ENCODE measurements at regions of chr20 and their contacts with region 1.

Region 1: DNA sequence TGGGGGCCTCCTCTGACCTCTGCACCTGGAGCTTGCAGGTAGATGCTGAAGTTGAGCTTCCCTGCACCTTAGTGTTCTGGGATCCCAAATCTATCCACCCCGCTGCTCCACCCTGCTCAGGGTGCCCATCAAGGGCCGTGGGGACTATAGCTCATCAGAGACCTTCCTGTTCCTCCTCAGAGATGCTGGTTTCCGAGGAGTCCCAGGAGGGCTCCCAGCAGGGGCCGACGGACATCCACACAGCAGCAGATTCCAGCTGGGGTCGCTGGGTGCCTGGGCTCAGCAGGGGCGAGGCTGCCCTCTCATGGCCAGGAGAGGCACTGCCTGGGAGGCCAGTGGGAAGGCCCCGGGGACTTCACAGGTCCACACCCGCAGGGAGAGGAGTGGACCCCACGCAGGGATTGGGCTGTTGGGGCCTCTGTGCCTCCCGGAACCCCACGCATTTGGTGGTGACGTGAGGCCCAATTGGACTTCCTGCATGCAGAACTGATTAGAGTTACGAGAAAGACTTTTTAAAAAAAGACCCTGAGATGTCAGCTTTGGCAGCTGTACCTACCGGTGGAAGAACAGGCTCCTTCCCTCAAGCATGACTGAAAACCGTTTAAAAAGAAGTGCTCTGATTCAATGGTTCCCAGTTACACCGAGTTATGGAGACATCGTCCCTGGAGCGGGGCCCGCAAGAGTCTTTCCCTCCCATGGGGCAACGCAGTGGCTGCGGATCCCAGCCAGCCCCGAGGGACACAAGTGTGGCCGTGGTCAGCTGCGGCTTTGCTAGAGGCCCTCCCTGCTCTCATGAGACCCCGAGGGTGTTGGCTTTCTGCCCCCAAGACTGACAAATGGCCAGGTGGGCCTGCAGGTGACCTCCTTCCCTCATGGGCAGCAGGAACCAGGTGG is 25.3 kb upstream of the SLCO4A1 start:
- DNase-seq: peak; percentile 88
- ATAC-seq: peak; percentile 75
- H3K4me3 Mint-ChIP-seq: peak overlapping the region; percentile 57
- H3K27ac Mint-ChIP-seq: peak overlapping the region; percentile 91
- H3K4me1 Mint-ChIP-seq: peaks cover 29% of the 10 kb centered on the region
- H3K27me3 Mint-ChIP-seq: no peaks in the 10 kb centered on the region

Region 2: DNA sequence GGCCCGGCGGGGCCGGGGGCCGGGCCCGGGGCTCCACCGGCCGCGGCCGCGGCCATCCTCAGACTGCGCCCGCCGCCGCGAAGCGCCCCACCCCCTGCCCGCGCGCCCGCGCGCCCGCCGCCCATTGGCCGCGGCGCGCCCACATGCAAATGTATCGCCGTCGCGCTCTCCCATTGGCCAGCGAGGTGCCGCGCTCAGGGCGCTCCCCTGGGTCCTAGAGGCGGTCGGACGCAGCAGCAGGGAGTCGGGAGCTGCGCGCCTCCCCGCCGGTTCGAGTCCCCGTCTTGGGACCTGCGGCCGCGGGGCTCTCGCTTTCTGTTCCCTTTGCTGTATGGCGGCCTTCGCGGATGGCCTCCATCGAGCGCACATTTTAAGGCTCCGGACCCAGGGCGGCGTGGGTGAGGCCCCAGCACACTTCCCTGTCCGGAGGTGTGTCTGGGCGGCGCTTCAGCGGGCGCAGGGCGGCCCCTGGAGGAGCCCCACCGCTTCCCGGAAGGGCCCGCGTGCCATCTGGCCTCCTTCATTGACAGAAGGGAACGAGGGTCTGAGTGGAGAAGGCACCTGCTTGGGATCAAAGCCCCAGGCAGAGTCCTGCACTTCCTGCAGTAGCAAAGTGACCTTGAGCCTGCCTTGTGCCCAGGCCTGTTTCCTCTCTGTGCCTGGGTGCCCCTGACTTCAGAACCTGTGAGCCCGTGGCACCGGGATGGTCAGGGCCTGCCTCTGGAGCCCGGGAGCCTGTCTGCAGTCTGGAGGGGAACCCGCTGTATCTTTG is 209.6 kb before region 1 on chr20 and contains the start of gene CABLES2:
- CTCF ChIA-PET with region 1: interaction called, 4 read pairs
- POLR2A ChIA-PET with region 1: no interaction called
- intact Hi-C with region 1: loop called (anchors 1 to 5 kb)
- DNase-seq: peak; percentile 96
- ATAC-seq: peak; percentile 93
- H3K4me3 Mint-ChIP-seq: peak within 1 kb of the TSS; percentile 72
- H3K27ac Mint-ChIP-seq: peak within 1 kb of the TSS; percentile 82
- H3K4me1 Mint-ChIP-seq: peaks cover 23% of the 10 kb centered on the region
- H3K27me3 Mint-ChIP-seq: peaks cover 2% of the 10 kb centered on the region
- total RNA-seq, gene CABLES2: 6.4 to 7.6 TPM

Region 3: GRCh38 chr20:62570897-62571666 is 45.9 kb before region 1 on chr20:
- CTCF ChIA-PET with region 1: no interaction called
- POLR2A ChIA-PET with region 1: no interaction called
- intact Hi-C with region 1: no loop called
- DNase-seq: no peak
- ATAC-seq: peak; percentile 14
- H3K4me3 Mint-ChIP-seq: no peak overlapping the region
- H3K27ac Mint-ChIP-seq: no peak overlapping the region
- H3K4me1 Mint-ChIP-seq: no peaks in the 10 kb centered on the region
- H3K27me3 Mint-ChIP-seq: peaks cover 16% of the 10 kb centered on the region

Region 4: DNA sequence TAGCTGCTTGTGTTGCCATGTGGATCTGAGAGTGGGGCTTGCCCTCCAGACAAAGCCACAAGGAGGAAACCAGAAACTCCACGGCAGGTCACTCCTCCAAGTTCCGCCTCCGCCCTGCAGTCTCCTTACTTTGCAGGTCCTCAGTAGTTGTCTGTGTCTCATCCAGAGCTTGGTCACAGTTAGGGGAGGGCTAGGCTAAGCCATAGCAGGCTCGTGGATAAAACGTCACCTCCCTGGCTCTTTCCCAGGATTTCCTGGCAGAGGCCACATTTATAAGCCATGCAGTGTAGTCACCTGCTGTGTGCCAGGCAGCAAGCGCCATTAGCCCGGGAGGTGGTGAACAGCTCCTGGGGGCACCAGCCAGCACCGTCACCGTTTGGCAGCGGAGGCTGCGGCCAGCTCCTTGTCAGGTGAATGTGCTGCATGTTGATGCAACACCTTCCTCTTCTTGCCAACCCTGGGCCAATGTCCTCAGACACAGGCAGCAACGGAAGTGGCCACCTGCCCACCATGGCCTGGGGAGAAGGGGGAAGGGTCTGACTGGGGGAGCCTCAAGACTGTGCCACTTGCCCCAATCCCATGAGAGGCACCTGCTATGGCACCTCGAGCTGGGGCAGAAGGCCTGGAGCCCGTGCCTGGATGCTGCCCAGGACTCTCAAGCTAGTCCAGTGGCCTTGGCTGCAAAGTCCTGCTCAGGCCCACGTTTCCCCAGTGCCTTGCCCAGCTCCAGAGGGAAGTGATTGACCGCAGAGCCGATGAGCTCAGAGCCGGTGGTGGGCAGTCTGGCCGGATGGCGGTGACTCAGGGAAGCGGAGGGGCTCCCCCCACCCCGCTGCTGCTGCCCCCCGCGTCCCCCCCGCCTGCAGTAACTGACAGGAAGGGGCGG is 13.7 kb before region 1 on chr20:
- CTCF ChIA-PET with region 1: interaction called, 6 read pairs
- POLR2A ChIA-PET with region 1: no interaction called
- intact Hi-C with region 1: loop called in 1 of 2 experiments (anchors 1 kb)
- DNase-seq: peak; percentile 78
- ATAC-seq: peak; percentile 70
- H3K4me3 Mint-ChIP-seq: peak overlapping the region; percentile 41
- H3K27ac Mint-ChIP-seq: peak overlapping the region; percentile 44
- H3K4me1 Mint-ChIP-seq: peaks cover 21% of the 10 kb centered on the region
- H3K27me3 Mint-ChIP-seq: peaks cover 16% of the 10 kb centered on the region

Region 5: GRCh38 chr20:62953839-62954703 is 337.1 kb after region 1 on chr20:
- CTCF ChIA-PET with region 1: no interaction called
- POLR2A ChIA-PET with region 1: no interaction called
- intact Hi-C with region 1: no loop called
- DNase-seq: peak; percentile 74
- ATAC-seq: peak; percentile 82
- H3K4me3 Mint-ChIP-seq: peak overlapping the region; percentile 69
- H3K27ac Mint-ChIP-seq: peak overlapping the region; percentile 85
- H3K4me1 Mint-ChIP-seq: peaks cover 25% of the 10 kb centered on the region
- H3K27me3 Mint-ChIP-seq: no peaks in the 10 kb centered on the region

Measured in activated CD4-positive, alpha-beta T cell treated with anti-CD3 and anti-CD28 coated beads for 36 hours (primary cell).